Right ventricle myocardium inferior (tissue), 1 donor: ENCODE measurements at regions of chr13 and their contacts with region 1.

Region 1: GRCh38 chr13:20197361-20197834 is 4.7 kb upstream of the GJB2 start:
- DNase-seq: no peak
- ATAC-seq: no peak

Region 2: GRCh38 chr13:20106742-20107141 is 90.7 kb before region 1 on chr13:
- intact Hi-C with region 1: no loop called
- DNase-seq: no peak
- ATAC-seq: no peak

Region 3: DNA sequence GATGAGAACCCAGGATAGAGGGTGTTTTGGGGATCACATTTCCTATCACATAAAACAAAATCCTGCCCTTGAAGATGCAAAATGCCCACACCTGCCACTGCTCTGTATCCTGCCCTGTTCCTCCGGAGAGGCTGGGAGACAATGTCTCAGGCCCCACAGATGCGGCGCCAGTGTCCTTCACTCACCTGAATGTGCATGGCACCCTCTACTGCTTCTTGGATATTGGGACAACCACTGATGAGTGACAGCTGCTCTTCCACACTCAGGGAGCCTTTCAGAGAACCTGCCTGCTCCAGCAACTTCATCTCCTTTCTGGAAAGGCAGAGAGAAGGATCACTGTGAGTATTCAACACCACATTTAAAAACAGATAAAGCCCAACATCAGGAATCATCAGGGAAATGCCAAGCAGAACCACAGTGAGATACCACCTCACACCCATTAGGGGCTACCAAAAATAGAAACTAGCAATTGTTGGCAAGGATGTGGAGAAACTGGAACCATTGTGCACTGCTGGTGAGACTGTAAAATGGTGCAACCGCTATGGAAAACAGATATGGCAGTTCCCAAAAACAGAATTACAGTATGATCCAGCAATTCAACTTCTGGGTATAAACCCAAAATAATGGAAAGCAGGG is 291.9 kb after region 1 on chr13:
- intact Hi-C with region 1: loop called (anchors 2 kb)
- DNase-seq: no peak
- ATAC-seq: peak; percentile 68

Region 4: GRCh38 chr13:20703780-20704445 is 506.5 kb after region 1 on chr13:
- intact Hi-C with region 1: loop called (anchors 5 kb)
- DNase-seq: peak; percentile 87
- ATAC-seq: peak; percentile 93

Region 5: GRCh38 chr13:20924758-20925394 is 727.5 kb after region 1 on chr13:
- intact Hi-C with region 1: loop called (anchors 10 kb)
- DNase-seq: peak; percentile 77
- ATAC-seq: no peak